Activated CD4-positive, alpha-beta T cell treated with anti-CD3 and anti-CD28 coated beads for 36 hours (primary cell): ENCODE measurements at regions of chr6 and their contacts with region 1.

Region 1: GRCh38 chr6:31366693-31367470 is 9.9 kb upstream of the HLA-B start:
- DNase-seq: peak; percentile 88
- ATAC-seq: peak; percentile 96
- H3K4me3 Mint-ChIP-seq: peak overlapping the region; percentile 73
- H3K27ac Mint-ChIP-seq: peak overlapping the region; percentile 49
- H3K4me1 Mint-ChIP-seq: peaks cover 21% of the 10 kb centered on the region
- H3K27me3 Mint-ChIP-seq: peaks cover 22% of the 10 kb centered on the region

Region 2: DNA sequence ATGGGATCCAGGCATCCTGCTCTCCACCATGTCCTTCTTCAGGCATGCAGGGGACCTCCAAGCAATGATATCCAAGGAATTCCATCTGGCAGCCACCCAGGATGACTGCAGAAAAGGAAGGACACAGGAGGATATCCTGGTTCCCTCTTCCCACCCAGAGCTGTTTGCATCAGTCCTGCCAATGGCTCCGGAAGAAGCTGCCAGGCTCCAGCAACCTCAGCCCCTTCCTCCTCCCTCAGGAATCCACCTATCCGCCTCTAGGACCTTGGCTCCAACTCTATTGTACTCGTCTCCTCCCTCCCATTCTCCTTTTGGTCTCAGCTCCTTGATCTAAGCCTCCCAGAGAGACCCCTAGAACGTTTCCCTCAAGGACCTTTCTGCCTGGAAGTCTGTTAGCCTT is 227.3 kb before region 1 on chr6:
- CTCF ChIA-PET with region 1: interaction called, 21 read pairs
- POLR2A ChIA-PET with region 1: no interaction called
- intact Hi-C with region 1: loop called (anchors 1 to 2 kb)
- DNase-seq: no peak
- ATAC-seq: no peak
- H3K4me3 Mint-ChIP-seq: no peak overlapping the region
- H3K27ac Mint-ChIP-seq: no peak overlapping the region
- H3K4me1 Mint-ChIP-seq: peaks cover 6% of the 10 kb centered on the region
- H3K27me3 Mint-ChIP-seq: no peaks in the 10 kb centered on the region

Region 3: DNA sequence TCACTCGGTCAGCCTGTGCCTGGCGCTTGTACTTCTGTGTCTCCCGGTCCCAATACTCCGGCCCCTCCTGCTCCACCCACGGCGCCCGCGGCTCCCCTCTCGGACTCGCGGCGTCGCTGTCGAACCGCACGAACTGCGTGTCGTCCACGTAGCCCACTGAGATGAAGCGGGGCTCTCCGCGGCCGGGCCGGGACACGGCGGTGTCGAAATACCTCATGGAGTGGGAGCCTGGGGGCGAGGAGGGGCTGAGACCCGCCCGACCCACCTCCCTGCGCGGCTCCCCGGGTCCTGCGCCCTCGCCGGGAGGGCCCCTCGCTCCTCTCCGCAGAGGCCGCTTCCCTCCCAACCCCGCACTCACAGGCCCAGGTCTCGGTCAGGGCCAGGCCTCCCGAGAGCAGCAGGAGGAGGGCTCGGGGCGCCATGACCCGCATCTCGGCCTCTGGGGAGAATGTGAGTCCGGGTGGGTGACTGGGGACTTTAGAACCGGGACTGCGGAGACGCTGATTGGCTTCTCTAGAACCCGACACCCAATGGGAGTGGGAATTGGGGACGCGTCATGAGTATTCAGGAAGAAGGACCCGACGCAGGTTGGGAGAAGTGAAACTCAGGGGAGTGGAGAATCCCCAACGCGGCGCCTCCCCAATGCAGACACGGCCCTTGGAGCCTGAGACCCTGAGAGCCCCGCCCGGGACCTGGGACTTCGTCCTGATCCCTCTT is 95.1 kb before region 1 on chr6 and contains the start of gene HLA-C:
- CTCF ChIA-PET with region 1: interaction called, 3 read pairs
- POLR2A ChIA-PET with region 1: interaction called, 6 read pairs
- intact Hi-C with region 1: loop called in 1 of 2 experiments (anchors 1 kb)
- DNase-seq: peak; percentile 92
- ATAC-seq: peak; percentile 89
- H3K4me3 Mint-ChIP-seq: peak within 1 kb of the TSS; percentile 95
- H3K27ac Mint-ChIP-seq: peak within 1 kb of the TSS; percentile 99
- H3K4me1 Mint-ChIP-seq: peaks cover 55% of the 10 kb centered on the region
- H3K27me3 Mint-ChIP-seq: no peaks in the 10 kb centered on the region
- total RNA-seq, gene HLA-C: 660 to 678 TPM

Region 4: GRCh38 chr6:31308050-31308844 is 58.6 kb before region 1 on chr6:
- CTCF ChIA-PET with region 1: interaction called, 16 read pairs
- POLR2A ChIA-PET with region 1: no interaction called
- intact Hi-C with region 1: no loop called
- DNase-seq: peak; percentile 80
- ATAC-seq: peak; percentile 90
- H3K4me3 Mint-ChIP-seq: peak overlapping the region; percentile 70
- H3K27ac Mint-ChIP-seq: peak overlapping the region; percentile 45
- H3K4me1 Mint-ChIP-seq: peaks cover 3% of the 10 kb centered on the region
- H3K27me3 Mint-ChIP-seq: peaks cover 8% of the 10 kb centered on the region

Region 5: GRCh38 chr6:31377029-31377428 is 10.1 kb after region 1 on chr6:
- CTCF ChIA-PET with region 1: interaction called, 13 read pairs
- POLR2A ChIA-PET with region 1: no interaction called
- intact Hi-C with region 1: no loop called
- DNase-seq: no peak
- ATAC-seq: no peak
- H3K4me3 Mint-ChIP-seq: no peak overlapping the region
- H3K27ac Mint-ChIP-seq: no peak overlapping the region
- H3K4me1 Mint-ChIP-seq: peaks cover 2% of the 10 kb centered on the region
- H3K27me3 Mint-ChIP-seq: peaks cover 17% of the 10 kb centered on the region